ENCODE measurements at regions of chr2 and their contacts with region 1.

Region 1: GRCh38 chr2:191051825-191052778 is 38.1 kb upstream of the STAT1 start:
- DNase-seq: no peak
- H3K4me3 ChIP-seq: no peak overlapping the region
- H3K27ac ChIP-seq: no peak overlapping the region
- H3K4me1 ChIP-seq: no peaks in the 10 kb centered on the region
- H3K27me3 ChIP-seq: no peaks in the 10 kb centered on the region
- CTCF ChIP-seq: peak in 2 of 3 experiments; percentile 45 to 52; a peak in 2 of 4 replicates
- EP300 ChIP-seq: no peak
- POLR2A ChIP-seq: no peak
- RAD21 ChIP-seq: peak; percentile 71 to 77

Region 2: GRCh38 chr2:190856986-190857385 is 195.1 kb before region 1 on chr2:
- CTCF ChIA-PET with region 1: no interaction called
- POLR2A ChIA-PET with region 1: no interaction called
- DNase-seq: no peak
- H3K4me3 ChIP-seq: no peak overlapping the region
- H3K27ac ChIP-seq: no peak overlapping the region
- H3K4me1 ChIP-seq: peaks cover 2 to 14% (median 9%) of the 10 kb centered on the region in 4 experiments; a peak in 6 of 7 replicates
- H3K27me3 ChIP-seq: no peaks in the 10 kb centered on the region
- CTCF ChIP-seq: no peak
- EP300 ChIP-seq: no peak
- POLR2A ChIP-seq: no peak
- RAD21 ChIP-seq: 0 out of 4 replicates have a peak, but pooled peaks of 1 of the 2 experiments have one; percentile 4

Region 3: DNA sequence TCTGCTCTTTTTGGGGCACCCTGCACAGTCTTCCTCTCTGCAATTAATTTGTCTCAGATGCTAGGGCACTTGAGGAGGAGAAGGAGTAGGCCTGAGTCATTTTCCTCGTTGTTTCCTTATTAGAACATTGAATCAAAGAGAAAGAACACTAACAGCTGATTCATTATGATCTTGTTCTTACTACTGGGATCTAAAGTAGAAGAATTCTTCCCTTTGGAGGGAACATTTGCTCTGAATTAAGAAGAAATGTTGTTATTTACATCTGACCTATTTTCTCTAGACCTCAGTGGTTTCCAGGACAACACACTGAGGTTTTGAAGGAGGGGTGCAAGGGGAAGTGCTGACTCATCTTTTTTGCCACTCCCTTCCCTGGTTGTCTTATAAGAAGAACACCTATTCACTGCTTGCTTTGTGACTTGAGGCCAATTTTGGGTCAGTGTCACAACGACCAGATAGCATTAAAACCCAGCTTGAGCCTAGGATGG is 13.8 kb before region 1 on chr2:
- CTCF ChIA-PET with region 1: interaction called, 55 read pairs
- POLR2A ChIA-PET with region 1: interaction called, 3 read pairs
- DNase-seq: no peak
- H3K4me3 ChIP-seq: no peak overlapping the region
- H3K27ac ChIP-seq: no peak overlapping the region
- H3K4me1 ChIP-seq: no peaks in the 10 kb centered on the region
- H3K27me3 ChIP-seq: no peaks in the 10 kb centered on the region
- CTCF ChIP-seq: no peak
- EP300 ChIP-seq: no peak
- POLR2A ChIP-seq: no peak
- RAD21 ChIP-seq: no peak

Region 4: GRCh38 chr2:191122638-191123294 is 70.7 kb after region 1 on chr2:
- CTCF ChIA-PET with region 1: no interaction called
- POLR2A ChIA-PET with region 1: no interaction called
- DNase-seq: no peak
- H3K4me3 ChIP-seq: no peak overlapping the region
- H3K27ac ChIP-seq: no peak overlapping the region
- H3K4me1 ChIP-seq: no peaks in the 10 kb centered on the region
- H3K27me3 ChIP-seq: no peaks in the 10 kb centered on the region
- CTCF ChIP-seq: no peak
- EP300 ChIP-seq: no peak
- POLR2A ChIP-seq: no peak
- RAD21 ChIP-seq: no peak

Region 5: GRCh38 chr2:191150600-191151330 is 98.7 kb after region 1 on chr2 and contains the start of gene STAT4:
- CTCF ChIA-PET with region 1: interaction called, 137 read pairs
- POLR2A ChIA-PET with region 1: interaction called, 4 read pairs
- DNase-seq: peak; percentile 25 to 70
- H3K4me3 ChIP-seq: peak within 1 kb of the TSS; percentile 57 to 71 (median 63)
- H3K27ac ChIP-seq: no peak within 1 kb of the TSS
- H3K4me1 ChIP-seq: peaks cover 0 to 4% (median 2%) of the 10 kb centered on the region in 4 experiments; a peak in 4 of 7 replicates
- H3K27me3 ChIP-seq: peaks cover 0 to 7% (median 4%) of the 10 kb centered on the region in 4 experiments; a peak in 2 of 7 replicates
- CTCF ChIP-seq: no peak
- EP300 ChIP-seq: no peak
- POLR2A ChIP-seq: 0 out of 3 replicates have a peak, but pooled peaks of 1 of the 2 experiments have one; percentile 48
- RAD21 ChIP-seq: no peak
- total RNA-seq, gene STAT4: 0.63 and 0.80 TPM in 2 replicates

Region 6: GRCh38 chr2:191218292-191218898 is 166.3 kb after region 1 on chr2:
- CTCF ChIA-PET with region 1: interaction called, 22 read pairs
- POLR2A ChIA-PET with region 1: no interaction called
- DNase-seq: peak; percentile 57 to 73
- H3K4me3 ChIP-seq: no peak overlapping the region
- H3K27ac ChIP-seq: no peak overlapping the region
- H3K4me1 ChIP-seq: peaks cover 0 to 3% (median 0%) of the 10 kb centered on the region in 4 experiments; a peak in 1 of 7 replicates
- H3K27me3 ChIP-seq: no peaks in the 10 kb centered on the region
- CTCF ChIP-seq: peak; percentile 37 to 85 (median 70)
- EP300 ChIP-seq: no peak
- POLR2A ChIP-seq: no peak
- RAD21 ChIP-seq: peak; percentile 83 to 86

Region 7: DNA sequence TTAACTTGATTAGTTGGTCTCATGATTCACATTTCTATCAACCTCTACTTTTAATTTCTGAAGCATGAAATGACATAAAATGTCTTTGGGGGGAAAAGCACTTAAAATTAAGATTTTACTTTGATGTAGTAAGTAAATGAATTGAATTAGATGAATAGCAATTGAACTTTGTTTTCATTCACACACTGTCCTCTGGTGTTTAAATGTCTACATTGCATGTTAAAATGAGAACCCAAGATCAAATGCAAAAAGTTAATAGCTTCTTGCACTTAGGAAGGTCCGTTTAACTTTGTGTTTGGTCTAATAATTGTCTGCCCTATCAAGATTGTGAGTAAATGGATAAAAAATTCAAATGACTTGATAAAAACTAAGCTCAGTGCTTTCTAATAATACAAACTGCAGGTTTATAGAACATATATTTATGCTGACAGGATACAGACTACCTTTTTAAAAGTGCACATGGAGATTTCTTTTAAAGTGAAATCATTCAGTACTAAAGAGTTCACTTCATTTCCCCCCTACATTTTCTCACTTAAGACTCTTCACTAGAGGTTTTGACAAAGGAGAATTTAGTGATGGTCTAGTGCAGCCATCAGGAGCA is 469.6 kb after region 1 on chr2:
- CTCF ChIA-PET with region 1: interaction called, 11 read pairs
- POLR2A ChIA-PET with region 1: no interaction called
- DNase-seq: no peak
- H3K4me3 ChIP-seq: no peak overlapping the region
- H3K27ac ChIP-seq: no peak overlapping the region
- H3K4me1 ChIP-seq: no peaks in the 10 kb centered on the region
- H3K27me3 ChIP-seq: no peaks in the 10 kb centered on the region
- CTCF ChIP-seq: peak in 1 of 3 experiments; percentile 43; a peak in 2 of 4 replicates
- EP300 ChIP-seq: no peak
- POLR2A ChIP-seq: no peak
- RAD21 ChIP-seq: peak in 1 of 2 experiments; percentile 68